Activated T-helper 1 cell treated with anti-CD3 and anti-CD28 coated beads, Interleukin-12 subunit alpha, Interleukin-12 subunit beta, Interleukin-2, Interleukin-4 antibody, amounts not matched to agents 30 ng/mL and 10 ng/mL and 1 ng/mL, durations not matched to agents 14 hours and 24 hours and 36 hours (primary cell): ENCODE measurements at regions of chr9 and their contacts with region 1.

Region 1: DNA sequence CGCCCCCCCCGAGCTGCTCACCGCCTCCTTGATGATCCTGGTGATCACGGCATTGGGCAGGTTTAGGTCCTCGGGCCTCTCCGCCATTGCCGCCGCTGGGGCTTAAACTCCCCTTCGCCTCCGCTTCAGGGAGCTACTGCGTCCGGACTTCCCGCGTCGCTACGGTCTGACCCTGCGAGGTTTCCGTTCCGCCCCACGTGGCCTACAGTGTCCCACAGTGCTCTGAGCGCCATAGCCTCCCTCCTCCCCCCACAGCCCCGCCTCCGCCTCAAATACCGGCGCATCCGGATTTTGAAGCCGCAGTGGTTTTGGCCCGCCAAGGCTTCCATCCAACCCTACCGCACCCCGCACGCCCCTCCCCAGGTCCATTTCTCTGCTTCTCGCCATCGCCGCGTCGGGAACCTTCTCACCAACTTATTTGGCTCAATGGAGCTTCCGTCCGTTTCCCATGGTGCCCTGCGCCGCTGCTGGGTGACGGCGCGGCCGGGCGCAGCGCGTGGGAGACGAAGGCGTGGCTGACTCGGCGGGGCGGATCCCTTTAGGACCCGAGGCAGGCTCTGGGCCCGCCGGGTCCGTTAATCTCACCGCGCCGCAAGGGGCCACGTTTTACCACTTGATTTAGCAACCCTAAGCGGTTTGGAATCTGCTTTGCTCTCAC is at the starts of genes C9orf43 and POLE3:
- DNase-seq: peak; percentile 92
- H3K4me3 Mint-ChIP-seq: peak within 1 kb of the TSS; percentile 89
- H3K27ac Mint-ChIP-seq: peak within 1 kb of the TSS; percentile 99
- H3K4me1 Mint-ChIP-seq: peaks cover 22% of the 10 kb centered on the region
- H3K27me3 Mint-ChIP-seq: no peaks in the 10 kb centered on the region
- total RNA-seq, gene C9orf43: 0.42 and 0.62 TPM in 2 replicates
- total RNA-seq, gene POLE3: 90.9 and 95.7 TPM in 2 replicates

Region 2: DNA sequence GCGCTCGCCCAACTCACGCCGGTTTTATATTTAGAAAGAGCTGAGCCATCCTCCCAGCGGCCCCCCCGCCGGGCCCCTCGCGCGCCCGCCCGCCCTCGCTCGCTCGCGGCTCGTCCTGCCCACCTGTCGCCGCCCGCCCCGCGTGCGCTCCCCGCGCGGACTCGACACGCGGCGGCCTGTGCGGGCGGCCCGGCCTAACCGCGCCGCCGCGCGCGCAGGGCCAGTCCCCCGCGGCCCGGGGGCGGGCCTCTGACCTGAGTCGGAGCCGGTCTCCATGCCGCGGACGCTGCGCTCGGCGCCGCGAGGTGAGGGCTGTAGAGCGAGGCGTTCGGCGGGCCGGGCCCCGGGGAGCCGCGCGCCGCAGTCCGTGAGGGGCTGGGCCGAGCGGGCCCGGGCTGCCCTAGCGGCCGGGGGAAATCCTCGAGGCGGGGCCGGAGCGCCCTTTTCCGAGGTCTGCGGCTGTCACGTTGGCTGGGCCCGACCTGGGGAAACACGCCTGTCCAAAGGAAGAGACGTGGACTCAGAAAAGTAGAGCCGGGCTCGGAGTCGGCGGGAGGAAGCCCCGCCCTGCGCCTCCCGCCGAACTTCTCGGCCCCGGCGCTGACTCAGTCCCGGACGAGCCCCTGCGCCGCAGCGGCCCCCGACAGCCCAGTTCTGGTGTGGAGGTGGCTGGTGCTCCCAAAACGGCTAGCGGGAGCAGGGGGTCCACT is 1926.3 kb before region 1 on chr9 and contains the start of gene ECPAS:
- intact Hi-C with region 1: loop called (anchors 10 kb)
- DNase-seq: peak; percentile 65
- H3K4me3 Mint-ChIP-seq: peak within 1 kb of the TSS; percentile 87
- H3K27ac Mint-ChIP-seq: peak within 1 kb of the TSS; percentile 86
- H3K4me1 Mint-ChIP-seq: peaks cover 34% of the 10 kb centered on the region
- H3K27me3 Mint-ChIP-seq: peaks cover 3% of the 10 kb centered on the region
- total RNA-seq, gene ECPAS: 98.9 and 110 TPM in 2 replicates

Region 3: DNA sequence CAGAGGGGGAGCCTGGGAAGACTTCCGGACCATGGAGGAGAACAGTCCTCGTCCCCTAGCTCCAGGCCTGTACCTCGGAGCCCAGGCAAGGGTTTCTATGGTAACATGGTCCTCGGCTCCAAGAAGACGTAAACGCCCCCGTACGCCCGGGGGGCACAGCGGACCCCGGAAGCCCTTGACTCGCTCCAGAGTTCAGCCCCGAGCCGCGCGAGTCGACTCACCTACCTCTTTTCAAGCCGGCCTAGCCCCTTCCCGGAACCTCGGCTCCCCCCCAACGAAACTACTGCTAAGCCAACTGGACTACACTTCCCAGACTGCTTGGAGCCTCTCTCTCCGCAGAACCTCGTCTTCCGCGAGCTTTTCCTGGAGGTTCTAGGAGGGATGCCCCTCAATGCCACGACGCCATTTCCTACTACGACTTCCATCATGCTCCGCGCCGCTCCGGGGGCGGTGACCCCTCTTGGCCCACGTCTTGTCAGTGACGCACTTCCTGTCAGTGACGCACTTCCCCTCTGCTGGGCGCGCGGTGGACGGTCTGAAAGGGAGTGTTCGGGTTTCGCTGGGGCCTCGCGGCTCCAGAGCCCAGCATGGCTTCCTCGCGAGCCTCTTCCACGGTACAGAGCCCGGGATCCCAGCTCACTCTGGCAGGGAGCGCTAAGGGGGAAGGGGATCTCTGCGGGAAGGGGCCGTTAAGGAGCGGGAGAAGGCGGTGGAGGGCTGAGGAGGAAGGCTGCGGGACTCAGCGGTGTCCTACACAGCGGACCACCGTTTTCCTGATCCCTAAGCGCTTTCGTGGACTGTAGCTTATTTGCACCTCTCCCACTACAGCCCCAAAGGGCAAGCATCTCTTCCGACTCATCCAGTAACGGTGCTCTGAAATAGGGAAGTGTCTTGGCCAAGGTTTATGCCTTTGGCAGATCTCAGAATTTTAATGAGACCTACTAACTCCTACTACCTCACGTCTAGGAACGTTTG is 134.9 kb before region 1 on chr9 and contains the starts of genes CDC26 and PRPF4:
- intact Hi-C with region 1: loop called (anchors 1 kb)
- DNase-seq: peak; percentile 94
- H3K4me3 Mint-ChIP-seq: no peak within 1 kb of the TSS
- H3K27ac Mint-ChIP-seq: no peak within 1 kb of the TSS
- H3K4me1 Mint-ChIP-seq: peaks cover 30% of the 10 kb centered on the region
- H3K27me3 Mint-ChIP-seq: no peaks in the 10 kb centered on the region
- total RNA-seq, gene CDC26: 49.9 and 50.6 TPM in 2 replicates
- total RNA-seq, gene PRPF4: 59.2 and 60.2 TPM in 2 replicates

Region 4: DNA sequence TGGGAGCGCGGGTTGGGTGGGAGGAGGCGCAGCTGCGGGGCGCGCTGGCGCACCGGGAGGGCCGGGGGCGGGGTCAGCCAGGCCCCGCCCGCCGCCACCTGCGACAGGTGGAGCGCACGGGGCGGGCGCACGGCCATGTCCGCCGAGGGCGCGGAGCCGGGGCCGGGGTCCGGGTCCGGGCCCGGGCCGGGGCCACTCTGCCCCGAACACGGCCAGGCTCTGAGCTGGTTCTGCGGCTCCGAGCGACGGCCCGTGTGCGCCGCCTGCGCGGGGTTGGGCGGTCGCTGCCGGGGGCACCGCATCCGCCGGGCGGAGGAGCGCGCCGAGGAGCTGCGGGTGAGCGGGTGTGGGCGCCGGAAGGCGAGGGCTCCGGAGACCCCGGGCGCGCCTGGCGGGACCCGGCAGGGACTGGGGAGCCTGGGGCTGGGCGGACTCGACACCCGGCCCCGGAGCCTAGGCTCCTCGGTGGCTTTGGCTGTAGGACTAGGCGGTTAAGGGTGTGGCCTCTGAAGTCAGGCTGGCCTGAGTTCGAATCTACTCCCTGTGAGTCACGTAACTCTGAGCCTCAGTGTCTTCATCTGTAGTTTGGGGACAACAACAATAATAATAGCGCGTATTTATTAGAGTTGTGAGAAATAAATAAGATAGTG is 60.8 kb before region 1 on chr9 and contains the start of gene BSPRY:
- intact Hi-C with region 1: loop called (anchors 1 kb)
- DNase-seq: peak; percentile 51
- H3K4me3 Mint-ChIP-seq: peak within 1 kb of the TSS; percentile 93
- H3K27ac Mint-ChIP-seq: peak within 1 kb of the TSS; percentile 92
- H3K4me1 Mint-ChIP-seq: peaks cover 68% of the 10 kb centered on the region
- H3K27me3 Mint-ChIP-seq: no peaks in the 10 kb centered on the region
- total RNA-seq, gene BSPRY: 12.3 and 12.8 TPM in 2 replicates

Region 5: DNA sequence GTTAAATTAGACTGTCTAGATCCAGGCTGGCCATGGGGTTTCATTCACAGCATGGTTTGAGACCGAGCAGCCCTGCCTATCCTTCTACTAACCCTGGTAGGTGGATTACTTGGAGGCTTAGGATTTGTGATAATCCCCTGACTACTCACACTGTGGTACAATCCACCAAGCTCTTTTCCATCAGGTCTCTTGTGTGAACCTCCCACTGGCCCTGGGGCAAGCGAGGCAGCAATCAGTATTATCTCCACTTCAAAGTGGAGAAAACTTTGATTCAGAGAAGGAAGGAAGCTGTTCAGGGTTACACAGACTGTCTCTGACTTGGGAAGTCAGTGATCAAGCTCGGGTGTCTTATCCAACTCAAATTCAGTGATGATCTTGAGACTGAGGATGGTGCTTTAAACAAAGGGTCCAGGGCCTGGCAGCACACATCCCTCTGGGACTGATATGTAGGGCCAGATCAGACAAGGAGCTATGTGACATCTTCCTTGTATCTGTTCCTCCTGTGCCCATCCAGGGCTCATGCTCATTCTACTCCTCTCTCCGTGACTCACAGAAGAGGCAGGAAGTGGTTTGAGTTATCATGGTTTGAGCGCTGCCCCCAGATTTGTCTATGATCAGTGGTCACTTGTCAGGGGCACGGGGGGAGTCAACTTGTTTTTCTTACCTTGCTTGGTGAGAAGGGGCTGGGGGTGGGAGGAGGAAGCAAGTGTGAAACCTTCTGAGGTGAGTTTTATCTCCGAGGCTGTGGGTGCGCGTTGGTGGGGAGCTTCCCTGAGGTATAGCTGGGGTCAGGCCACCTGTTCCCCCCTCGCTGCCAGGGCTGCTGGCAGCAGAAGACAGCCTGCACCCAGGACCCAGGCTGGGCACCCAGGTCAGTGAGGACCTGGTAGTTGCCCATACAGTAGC is 101.8 kb after region 1 on chr9:
- intact Hi-C with region 1: loop called (anchors 1 kb)
- DNase-seq: peak; percentile 57
- H3K4me3 Mint-ChIP-seq: peak overlapping the region; percentile 62
- H3K27ac Mint-ChIP-seq: peak overlapping the region; percentile 90
- H3K4me1 Mint-ChIP-seq: peaks cover 76% of the 10 kb centered on the region
- H3K27me3 Mint-ChIP-seq: peaks cover 3% of the 10 kb centered on the region

Region 6: DNA sequence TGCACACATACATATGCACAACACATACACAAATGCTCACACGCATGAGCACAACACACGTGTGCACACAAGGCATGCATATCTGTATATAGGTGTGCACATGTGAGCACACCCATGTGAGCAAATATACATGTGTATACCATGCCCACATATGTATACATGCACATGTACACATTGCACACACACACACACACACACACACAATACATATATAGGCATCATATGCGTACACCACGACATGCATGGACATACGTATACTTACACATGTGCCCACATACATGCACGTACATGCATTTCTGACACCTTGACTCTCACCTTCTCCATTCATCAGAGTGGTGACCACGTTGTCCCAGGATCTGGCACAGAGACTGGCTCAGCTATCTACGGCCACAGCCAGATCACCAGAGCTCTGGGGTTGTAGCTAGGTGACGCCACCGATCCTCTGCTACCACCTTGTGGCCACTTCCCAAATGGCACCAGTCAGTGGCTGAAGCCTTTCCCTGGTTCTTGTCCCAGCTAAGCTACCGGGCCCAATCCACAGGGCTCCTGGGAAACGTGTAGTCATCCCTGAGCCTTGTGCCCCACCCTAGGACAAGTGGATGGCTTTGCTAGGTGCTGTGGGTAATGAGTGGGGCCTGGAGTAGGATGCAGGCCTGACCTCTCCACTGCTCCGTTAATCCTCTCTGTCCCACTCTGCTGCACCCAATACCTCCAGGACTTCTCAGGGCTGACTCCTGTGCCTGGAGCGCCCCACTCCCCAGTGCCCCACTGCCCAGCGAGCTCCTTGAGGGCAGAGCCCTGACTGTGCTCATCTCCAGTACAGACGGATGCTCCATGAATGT is 247.6 kb after region 1 on chr9:
- intact Hi-C with region 1: loop called (anchors 1 kb)
- DNase-seq: peak; percentile 55
- H3K4me3 Mint-ChIP-seq: no peak overlapping the region
- H3K27ac Mint-ChIP-seq: no peak overlapping the region
- H3K4me1 Mint-ChIP-seq: no peaks in the 10 kb centered on the region
- H3K27me3 Mint-ChIP-seq: peaks cover 12% of the 10 kb centered on the region